Activated CD4-positive, alpha-beta T cell treated with anti-CD3 and anti-CD28 coated beads, Interleukin-2, amount 10 ng/mL, durations not matched to agents 24 days and 14 days (primary cell): ENCODE measurements at regions of chr17 and their contacts with region 1.

Region 1: DNA sequence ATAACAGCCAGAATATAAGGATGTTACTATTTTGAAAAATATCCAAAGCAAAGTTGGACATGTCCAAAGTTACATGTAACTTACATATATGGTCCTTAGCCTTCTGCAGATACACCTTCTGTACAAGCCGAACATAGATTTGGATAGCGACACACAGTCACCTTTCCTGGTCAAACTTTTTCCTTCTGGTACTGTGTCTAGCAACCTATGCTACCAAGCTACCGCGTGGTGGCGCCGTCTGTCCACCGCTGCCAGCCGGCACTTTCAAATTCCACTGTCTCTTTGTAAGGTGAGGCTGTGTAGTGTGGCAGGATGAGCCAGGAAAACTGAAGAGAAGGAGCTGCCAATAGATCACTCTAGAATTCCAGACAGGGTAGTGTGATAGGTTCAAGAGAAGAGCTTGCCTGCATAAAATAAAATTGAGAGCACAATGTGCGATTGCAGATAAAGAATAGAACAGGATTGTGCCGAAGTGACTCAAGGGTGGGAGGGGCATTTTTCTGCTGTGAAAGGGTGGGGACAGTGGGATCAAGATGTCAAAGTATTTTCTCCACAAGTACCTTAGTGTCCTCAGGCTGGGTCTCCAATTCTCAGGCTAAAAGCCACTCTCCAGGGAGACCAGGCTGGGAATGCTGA is 366.9 kb downstream of the SLC39A11 start:
- DNase-seq: peak; percentile 85
- H3K4me3 Mint-ChIP-seq: peak overlapping the region; percentile 26
- H3K27ac Mint-ChIP-seq: peak overlapping the region; percentile 82
- H3K4me1 Mint-ChIP-seq: peaks cover 42% of the 10 kb centered on the region
- H3K27me3 Mint-ChIP-seq: no peaks in the 10 kb centered on the region

Region 2: DNA sequence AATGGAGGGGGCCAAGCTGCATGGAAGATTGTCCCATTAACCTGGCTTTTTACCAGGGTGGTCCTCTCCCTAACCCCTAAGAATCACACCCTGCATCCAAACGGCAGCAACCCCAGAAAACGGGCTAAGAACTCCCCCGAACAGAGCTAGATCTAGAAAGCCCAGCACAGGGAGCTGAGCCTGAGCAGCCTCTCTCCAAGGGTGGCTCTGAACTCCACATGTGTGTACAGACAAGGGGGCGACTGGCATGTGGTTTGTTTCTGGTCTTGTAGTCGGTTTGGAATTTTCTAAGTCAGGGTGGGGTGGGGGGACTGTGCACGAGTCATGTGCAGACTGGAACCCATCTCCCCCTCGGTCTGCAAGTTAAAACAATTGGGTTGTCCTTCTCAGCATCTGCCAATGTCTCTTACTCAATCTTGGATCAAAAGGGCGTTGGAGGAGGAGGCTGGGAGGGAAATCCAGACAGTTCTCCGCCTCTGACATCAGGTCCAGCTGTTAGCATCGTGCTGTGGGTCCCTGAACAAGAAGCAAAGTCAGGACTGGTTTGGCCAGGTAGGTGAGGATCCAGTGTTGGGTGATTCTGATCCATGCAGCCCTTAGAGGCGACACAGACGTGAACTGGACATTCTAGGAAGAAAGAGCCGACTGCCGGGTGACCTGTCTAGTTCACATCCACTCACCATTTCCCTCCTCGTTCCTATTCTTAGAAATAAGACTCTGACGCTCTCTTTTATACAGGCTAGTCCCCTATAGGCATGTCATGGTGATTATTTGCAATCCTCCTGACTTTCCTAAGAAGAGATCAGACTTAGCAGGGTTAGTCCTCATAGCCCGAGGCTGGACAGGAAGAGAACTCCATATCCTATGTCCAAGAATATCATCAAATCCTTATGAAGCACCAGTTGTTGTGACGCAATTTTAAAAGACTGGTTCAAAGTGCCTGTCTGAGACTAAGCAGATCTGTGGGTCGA is 222.9 kb before region 1 on chr17:
- intact Hi-C with region 1: no loop called
- DNase-seq: no peak
- H3K4me3 Mint-ChIP-seq: no peak overlapping the region
- H3K27ac Mint-ChIP-seq: no peak overlapping the region
- H3K4me1 Mint-ChIP-seq: no peaks in the 10 kb centered on the region
- H3K27me3 Mint-ChIP-seq: no peaks in the 10 kb centered on the region

Region 3: DNA sequence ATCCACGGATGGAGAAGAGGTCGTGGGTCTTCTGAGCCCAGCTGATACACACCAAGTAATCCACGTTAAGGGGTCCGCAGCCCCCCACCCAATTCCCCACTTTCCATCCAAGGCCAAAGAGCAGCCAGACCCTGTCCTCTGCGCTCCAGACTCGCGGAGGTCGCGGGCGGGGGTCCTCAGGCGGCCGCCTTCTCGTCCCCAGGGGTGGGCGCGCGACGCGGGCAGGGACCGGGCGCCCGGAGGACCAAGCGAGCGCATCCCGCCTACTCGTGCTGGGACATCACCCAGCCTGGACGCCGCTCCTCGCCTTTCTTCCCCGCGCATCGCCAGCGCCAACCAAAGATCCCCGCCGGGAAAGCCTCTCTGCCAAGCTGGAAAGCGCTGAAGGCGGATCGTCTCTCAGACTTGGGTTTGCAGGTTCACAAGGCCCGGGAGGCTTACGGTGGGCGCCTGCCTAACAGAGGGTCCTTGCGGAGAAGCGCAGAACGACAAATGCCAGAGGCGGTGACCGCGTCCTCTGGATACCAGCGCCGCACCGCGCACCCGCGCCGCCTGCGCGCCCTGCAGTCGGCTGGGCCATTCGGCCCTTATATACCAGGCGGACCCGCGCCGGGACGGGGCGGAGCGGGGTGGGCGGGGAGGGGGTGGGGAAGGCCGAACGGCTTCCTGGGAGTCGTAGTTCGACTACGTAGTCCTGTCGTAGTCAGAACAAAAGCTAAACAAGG is 133.1 kb before region 1 on chr17:
- intact Hi-C with region 1: loop called (anchors 5 kb)
- DNase-seq: peak; percentile 92
- H3K4me3 Mint-ChIP-seq: peak overlapping the region; percentile 90
- H3K27ac Mint-ChIP-seq: peak overlapping the region; percentile 64
- H3K4me1 Mint-ChIP-seq: peaks cover 28% of the 10 kb centered on the region
- H3K27me3 Mint-ChIP-seq: peaks cover 54% of the 10 kb centered on the region

Region 4: GRCh38 chr17:72699545-72699944 is 26.0 kb before region 1 on chr17:
- intact Hi-C with region 1: no loop called
- DNase-seq: no peak
- H3K4me3 Mint-ChIP-seq: no peak overlapping the region
- H3K27ac Mint-ChIP-seq: no peak overlapping the region
- H3K4me1 Mint-ChIP-seq: peaks cover 7% of the 10 kb centered on the region
- H3K27me3 Mint-ChIP-seq: no peaks in the 10 kb centered on the region

Region 5: DNA sequence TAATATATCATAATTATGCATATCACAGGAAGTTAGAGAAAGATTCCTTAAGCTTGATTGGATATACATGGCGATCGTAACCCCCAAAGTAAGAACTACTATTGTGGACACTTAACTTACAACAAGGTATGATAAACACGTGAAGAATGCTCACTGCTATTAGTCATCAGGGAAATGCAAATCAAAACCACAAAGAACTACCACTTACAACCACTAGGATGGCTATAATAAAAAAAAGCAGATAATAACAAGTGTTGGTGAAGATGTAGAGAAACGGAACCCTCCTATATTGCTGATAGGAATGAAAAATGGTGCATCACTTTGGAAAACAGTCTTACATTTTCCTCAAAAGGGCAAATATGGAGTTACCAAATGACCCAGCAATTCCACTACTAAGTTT is 101.1 kb after region 1 on chr17:
- intact Hi-C with region 1: no loop called
- DNase-seq: no peak
- H3K4me3 Mint-ChIP-seq: no peak overlapping the region
- H3K27ac Mint-ChIP-seq: no peak overlapping the region
- H3K4me1 Mint-ChIP-seq: peaks cover 5% of the 10 kb centered on the region
- H3K27me3 Mint-ChIP-seq: no peaks in the 10 kb centered on the region

Region 6: DNA sequence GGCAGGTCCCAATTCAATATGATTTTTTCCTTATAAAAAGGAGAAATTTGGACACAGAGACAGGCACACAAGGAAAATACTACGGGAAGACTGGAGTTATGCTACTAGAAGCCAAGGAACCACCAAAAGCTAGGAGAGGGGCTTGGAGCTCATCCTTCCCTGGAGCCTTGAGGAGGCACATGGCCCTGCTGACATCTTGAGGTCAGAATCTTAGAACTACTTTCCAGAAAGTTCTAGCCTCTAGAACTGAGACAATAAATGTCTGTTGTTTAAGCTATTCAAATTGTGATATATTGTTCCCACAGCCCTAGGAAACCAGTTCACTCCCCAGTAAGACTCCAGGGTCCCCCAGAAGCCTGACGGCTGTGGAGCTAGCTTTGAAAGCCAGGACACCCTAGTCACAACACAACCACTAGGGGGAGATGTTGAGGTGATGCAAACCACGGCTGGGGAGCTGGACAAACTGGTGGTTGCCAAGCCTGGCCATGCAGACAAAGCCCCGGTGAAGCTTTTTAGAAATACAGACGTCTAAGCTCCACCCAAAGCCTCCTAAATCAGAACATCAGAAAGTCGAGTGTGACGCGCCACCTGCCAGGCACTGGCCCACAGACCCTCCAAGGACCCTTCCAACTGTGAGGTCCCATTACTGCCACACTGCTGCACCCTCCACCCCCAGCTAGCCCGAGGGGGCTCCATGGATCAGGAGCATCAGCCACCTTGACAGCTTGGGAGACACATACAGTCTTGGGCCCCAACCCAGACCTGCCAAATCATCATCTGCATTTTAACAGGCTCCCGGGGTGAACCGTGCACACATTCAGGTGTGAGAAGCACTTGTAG is 260.6 kb after region 1 on chr17:
- intact Hi-C with region 1: loop called (anchors 2 kb)
- DNase-seq: peak; percentile 86
- H3K4me3 Mint-ChIP-seq: no peak overlapping the region
- H3K27ac Mint-ChIP-seq: no peak overlapping the region
- H3K4me1 Mint-ChIP-seq: peaks cover 2% of the 10 kb centered on the region
- H3K27me3 Mint-ChIP-seq: no peaks in the 10 kb centered on the region

Region 7: GRCh38 chr17:73099511-73099910 is 374.0 kb after region 1 on chr17:
- intact Hi-C with region 1: no loop called
- DNase-seq: no peak
- H3K4me3 Mint-ChIP-seq: no peak overlapping the region
- H3K27ac Mint-ChIP-seq: no peak overlapping the region
- H3K4me1 Mint-ChIP-seq: no peaks in the 10 kb centered on the region
- H3K27me3 Mint-ChIP-seq: peaks cover 11% of the 10 kb centered on the region

Region 8: DNA sequence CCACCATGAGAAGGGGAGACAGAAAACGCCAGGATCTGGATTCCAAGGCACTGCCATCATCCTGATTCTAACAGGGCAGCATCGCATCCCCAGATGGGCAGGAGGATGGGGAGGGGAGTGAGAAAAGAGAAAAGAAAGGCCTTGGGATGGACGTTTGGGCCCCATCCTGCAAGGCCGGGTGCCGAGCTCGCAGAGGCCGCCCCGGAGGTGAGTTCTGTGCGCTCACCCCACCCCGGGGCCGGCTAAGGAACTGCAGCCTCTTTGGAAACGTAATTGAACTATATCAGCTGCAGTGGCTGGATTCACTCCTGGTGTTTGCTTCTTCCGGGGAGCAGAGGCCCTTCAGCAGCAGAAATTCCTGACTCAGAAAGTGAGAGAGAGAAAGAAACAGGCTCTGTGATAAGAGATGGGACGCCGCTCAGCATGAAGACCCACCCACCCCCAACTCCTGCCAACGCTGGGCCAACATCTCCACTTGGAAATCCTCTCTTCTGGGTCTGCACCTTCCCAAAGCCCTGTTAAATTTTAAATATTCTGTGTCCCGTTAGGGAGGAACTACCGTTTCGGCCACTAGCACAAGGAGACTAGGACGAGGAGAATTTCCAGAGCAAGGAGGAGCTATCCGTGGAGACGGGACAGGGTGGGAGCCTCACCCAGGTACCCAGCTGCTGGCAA is 430.8 kb after region 1 on chr17:
- intact Hi-C with region 1: loop called (anchors 1 kb)
- DNase-seq: peak; percentile 87
- H3K4me3 Mint-ChIP-seq: no peak overlapping the region
- H3K27ac Mint-ChIP-seq: no peak overlapping the region
- H3K4me1 Mint-ChIP-seq: peaks cover 4% of the 10 kb centered on the region
- H3K27me3 Mint-ChIP-seq: peaks cover 15% of the 10 kb centered on the region

Region 9: DNA sequence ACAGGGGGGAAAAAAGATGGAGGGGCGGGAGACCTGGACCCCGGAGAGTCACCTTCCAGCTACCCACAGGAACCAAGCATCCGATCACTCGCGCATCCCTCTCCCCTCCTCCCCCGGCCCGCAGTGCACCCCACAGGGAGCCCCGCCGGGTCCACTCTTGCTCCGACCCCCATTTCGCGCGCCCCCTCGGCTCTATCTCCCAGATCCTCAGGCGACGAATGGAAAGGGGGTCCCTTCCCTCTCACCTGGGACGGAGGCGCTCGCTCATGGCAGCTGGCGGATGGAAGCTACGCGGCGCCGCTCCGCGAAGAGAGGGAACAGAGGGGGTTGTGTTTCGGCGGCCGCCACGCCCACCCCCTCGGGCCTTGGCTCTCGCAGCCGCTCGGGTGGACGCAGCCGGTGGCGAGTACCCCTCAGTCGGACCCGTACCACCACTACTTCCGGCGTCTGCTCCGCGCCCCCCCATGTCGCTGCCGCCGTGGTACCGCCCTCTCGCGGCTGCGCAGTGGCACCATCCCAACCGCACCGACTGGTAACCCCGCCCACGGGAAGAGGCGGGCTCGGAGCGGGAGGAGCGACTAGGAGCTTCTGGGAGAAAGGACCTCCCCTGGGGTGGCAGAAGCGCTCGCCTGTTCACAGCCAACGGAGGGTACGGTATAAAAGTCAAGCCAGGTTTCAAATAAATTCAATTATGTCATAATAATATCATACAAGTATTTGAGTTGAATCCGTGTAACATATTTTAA is 506.5 kb after region 1 on chr17:
- intact Hi-C with region 1: loop called (anchors 2 kb)
- DNase-seq: peak; percentile 99
- H3K4me3 Mint-ChIP-seq: peak overlapping the region; percentile 95
- H3K27ac Mint-ChIP-seq: peak overlapping the region; percentile 95
- H3K4me1 Mint-ChIP-seq: peaks cover 45% of the 10 kb centered on the region
- H3K27me3 Mint-ChIP-seq: no peaks in the 10 kb centered on the region